Cardiac septum (tissue), 1 donor: ENCODE measurements at regions of chr3 and their contacts with region 1.

Region 1: DNA sequence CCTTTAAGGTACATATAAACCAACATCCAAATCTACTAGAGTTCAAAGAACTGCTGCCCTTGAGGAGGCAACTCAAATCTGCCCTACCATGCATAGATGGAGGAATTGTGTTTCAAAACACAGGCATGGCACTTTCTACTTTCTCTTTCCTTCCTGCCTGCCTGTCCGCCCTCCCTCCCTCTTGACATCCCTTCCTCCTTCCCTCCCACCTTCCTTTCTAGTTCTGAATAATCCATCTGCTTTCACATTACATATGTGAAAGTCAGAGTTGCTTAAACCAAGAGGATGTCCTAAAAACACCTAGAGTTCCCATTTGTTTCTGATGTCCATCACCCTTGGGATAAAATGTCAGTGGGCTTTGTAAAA is 537.6 kb downstream of the FOXP1 start:
- DNase-seq: no peak

Region 2: GRCh38 chr3:71006810-71007785 is 38.8 kb before region 1 on chr3:
- intact Hi-C with region 1: loop called (anchors 5 kb)
- DNase-seq: no peak

Region 3: GRCh38 chr3:71149959-71150954 is 104.4 kb after region 1 on chr3:
- intact Hi-C with region 1: no loop called
- DNase-seq: no peak